Gastrocnemius medialis (tissue), 4 donors: ENCODE measurements at regions of chr5 and their contacts with region 1.

Region 1: GRCh38 chr5:45454090-45454489 is 242.1 kb downstream of the HCN1 start:
- DNase-seq: peak; percentile 32 to 53
- ATAC-seq: peak; percentile 99 to 100
- H3K4me3 ChIP-seq: no peak overlapping the region
- H3K27ac ChIP-seq: peak overlapping the region in 2 of 4 donors; percentile 34 to 57
- H3K4me1 ChIP-seq: peaks cover 5 to 7% of the 10 kb centered on the region in 2 donors
- H3K27me3 ChIP-seq: no peaks in the 10 kb centered on the region
- CTCF ChIP-seq: no peak
- POLR2A ChIP-seq: no peak

Region 2: DNA sequence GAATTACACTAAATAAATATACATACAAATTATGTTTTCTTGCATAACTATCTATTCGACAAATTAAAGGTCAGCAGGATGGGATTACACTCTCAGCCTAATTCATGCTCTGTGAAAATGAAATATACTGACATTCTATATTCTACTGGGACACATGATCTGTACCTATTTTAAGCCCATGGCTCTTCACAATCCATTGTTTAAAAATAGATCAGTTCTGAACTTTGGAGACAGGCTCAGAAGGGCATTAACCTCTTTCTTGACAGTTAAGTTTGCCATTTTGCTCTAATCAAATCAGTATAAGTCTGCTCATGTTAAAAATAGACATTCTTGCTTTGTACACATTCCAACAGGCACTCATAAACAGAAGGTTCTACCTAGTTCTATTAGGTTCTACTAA is 119.2 kb before region 1 on chr5:
- in situ Hi-C with region 1: no loop called
- intact Hi-C with region 1: loop called (anchors 5 kb)
- DNase-seq: no peak
- ATAC-seq: peak; percentile 98 to 99
- H3K4me3 ChIP-seq: no peak overlapping the region
- H3K27ac ChIP-seq: peak overlapping the region; percentile 67 to 80 (median 70)
- H3K4me1 ChIP-seq: peaks cover 4 to 17% of the 10 kb centered on the region in 2 donors
- H3K27me3 ChIP-seq: no peaks in the 10 kb centered on the region
- CTCF ChIP-seq: no peak
- POLR2A ChIP-seq: no peak